ENCODE measurements at regions of chr17 and their contacts with region 1.

Region 1: DNA sequence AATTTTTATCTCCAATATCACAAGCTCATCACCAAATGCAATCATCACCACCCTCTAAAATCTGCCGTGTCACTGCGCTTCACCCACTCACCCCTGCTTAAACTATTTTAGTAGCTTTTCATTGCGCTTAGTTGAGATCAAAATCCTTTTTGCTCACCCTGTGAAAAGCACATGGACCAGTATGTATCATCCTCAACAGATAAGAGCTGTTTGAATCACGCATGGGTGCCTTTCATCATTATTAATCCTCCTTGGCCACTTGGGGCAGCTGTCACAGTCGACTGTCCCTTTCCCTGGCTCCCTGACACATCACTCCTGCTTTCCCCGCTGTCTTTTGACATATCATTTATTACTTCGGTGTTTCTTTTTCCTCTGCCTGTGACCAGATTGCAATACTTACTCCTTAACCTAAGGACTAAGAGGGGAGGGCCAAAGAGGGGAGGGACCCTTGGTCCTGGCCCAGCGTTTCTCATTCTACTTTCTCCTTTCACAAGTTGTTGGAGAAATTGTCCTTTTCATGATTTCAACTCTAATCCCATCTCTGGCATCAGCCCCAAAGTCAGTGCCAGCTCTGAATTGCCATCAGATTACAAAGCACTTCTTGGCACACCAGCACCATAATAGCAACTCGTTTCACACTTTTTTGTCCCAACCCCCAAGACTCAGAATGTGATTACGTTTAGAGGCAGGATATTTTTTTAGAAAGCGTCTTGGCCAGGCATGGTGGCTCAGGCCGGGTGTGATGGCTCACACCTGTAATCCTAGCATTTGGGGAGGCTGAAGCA is 8.6 kb upstream of the KDM6B start:
- DNase-seq: no peak
- ATAC-seq: peak; percentile 72
- H3K4me3 ChIP-seq: no peak overlapping the region
- H3K27ac ChIP-seq: no peak overlapping the region
- H3K4me1 ChIP-seq: peaks cover 0 to 15% of the 10 kb centered on the region in 2 experiments; a peak in 2 of 4 replicates
- H3K27me3 ChIP-seq: no peaks in the 10 kb centered on the region
- CTCF ChIP-seq: peak in 2 of 3 experiments; percentile 36 to 43; a peak in 4 of 6 replicates
- POLR2A ChIP-seq: no peak
- RAD21 ChIP-seq: peak; percentile 27; the same call in 1 of the 2 replicates

Region 2: DNA sequence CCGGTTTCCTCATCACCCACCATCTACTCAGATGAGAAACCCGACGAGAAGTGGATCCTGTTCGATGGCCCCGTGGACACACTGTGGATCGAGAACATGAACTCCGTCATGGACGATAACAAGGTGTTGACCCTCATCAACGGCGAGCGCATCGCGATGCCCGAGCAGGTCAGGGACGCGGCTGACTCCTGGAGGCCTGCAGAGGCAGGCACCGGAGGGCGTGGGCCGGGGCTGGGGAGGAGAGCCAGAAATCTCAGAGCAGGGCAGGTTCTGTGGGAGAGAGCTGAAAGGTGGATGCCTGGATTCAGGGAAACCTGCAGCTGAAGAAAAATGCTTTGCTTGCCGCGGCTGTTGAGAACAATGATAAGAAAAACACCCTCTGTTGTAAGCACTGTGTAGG is 38.5 kb before region 1 on chr17:
- CTCF ChIA-PET with region 1: no interaction called
- POLR2A ChIA-PET with region 1: no interaction called
- RAD21 ChIA-PET with region 1: no interaction called
- intact Hi-C with region 1: no loop called
- DNase-seq: no peak
- ATAC-seq: no peak
- H3K4me3 ChIP-seq: no peak overlapping the region
- H3K27ac ChIP-seq: no peak overlapping the region
- H3K4me1 ChIP-seq: no peaks in the 10 kb centered on the region
- H3K27me3 ChIP-seq: no peaks in the 10 kb centered on the region
- CTCF ChIP-seq: no peak
- POLR2A ChIP-seq: no peak
- RAD21 ChIP-seq: no peak

Region 3: GRCh38 chr17:7851438-7852256 is 26.2 kb after region 1 on chr17:
- CTCF ChIA-PET with region 1: interaction called, 9 read pairs
- POLR2A ChIA-PET with region 1: interaction called, 4 read pairs
- RAD21 ChIA-PET with region 1: interaction called in 1 of 2 experiments, 6 read pairs
- intact Hi-C with region 1: loop called (anchors 1 kb)
- DNase-seq: no peak
- ATAC-seq: peak; percentile 88
- H3K4me3 ChIP-seq: peak overlapping the region; percentile 50 to 77
- H3K27ac ChIP-seq: peak overlapping the region; percentile 68
- H3K4me1 ChIP-seq: peaks cover 20 to 43% of the 10 kb centered on the region in 2 experiments
- H3K27me3 ChIP-seq: no peaks in the 10 kb centered on the region
- CTCF ChIP-seq: peak; percentile 85 to 93 (median 88)
- POLR2A ChIP-seq: peak; percentile 31
- RAD21 ChIP-seq: peak; percentile 98

Measured in HCT116 (cell line).